Mammary epithelial cell (primary cell): ENCODE measurements at regions of chr19 and their contacts with region 1.

Region 1: DNA sequence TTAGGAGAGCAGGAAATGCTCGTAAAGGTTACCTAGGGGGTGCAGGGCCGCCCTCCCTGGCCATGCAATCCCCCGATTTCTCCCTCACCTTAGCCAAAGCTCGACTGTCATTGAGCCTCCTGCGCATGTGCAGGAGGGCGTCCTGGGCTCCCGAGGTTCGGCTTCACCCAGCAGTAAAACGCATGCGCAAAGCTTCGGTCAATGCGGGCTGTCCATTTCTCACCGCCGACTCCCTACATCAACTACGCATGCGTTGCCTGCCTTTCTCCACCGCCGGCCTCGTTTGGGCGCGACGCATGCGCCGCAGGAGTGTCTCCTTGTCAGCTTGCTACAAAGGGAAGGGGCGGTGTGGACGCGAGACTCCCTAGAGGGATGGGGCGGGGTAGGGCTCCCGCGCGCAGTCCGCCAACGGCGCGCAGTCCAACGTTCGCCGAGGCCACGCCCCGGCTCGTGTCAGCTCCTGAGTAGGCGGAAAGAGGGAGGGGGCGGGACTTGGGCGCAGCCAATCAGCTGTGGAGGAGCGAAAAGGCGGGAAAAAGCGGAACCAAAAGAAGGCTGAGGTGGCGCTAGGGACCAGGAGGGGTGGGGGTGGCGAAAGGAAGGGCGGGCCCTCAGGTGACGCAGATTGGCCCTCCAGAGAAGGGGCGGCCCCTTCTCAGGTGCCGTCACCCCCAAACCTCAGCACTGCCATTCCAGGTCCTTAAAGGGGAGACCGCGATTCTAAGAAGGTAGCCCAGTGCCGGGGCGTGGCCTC is at the starts of genes SYNGR4 and TMEM143:
- DNase-seq: peak; percentile 99
- H3K4me3 ChIP-seq: peak within 1 kb of the TSS; percentile 41 to 58 (median 50)
- H3K27ac ChIP-seq: peak within 1 kb of the TSS; percentile 79
- H3K4me1 ChIP-seq: peaks cover 8% of the 10 kb centered on the region
- H3K27me3 ChIP-seq: no peaks in the 10 kb centered on the region
- CTCF ChIP-seq: no peak
- total RNA-seq, gene SYNGR4: not detected
- total RNA-seq, gene TMEM143: 4.5 to 9.0 TPM

Region 2: DNA sequence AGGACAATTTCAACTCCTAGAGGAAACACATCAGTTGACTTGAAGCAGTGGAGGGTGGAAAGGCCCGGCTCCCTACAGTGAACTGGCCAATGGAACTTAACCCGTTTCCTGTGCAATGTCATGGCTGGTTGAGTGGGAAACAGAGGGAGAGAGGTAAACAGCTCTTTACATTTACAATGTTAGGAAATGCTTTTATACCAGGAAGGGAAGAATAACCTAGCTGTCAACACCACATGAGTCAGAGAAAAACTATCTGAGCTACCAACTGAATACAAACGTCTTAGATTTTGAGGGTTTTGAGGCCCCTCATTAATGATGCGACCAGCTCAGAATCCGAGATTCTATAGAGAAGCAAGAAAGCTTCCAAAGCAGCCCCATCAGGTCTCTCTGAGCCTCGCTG is 145.0 kb before region 1 on chr19:
- CTCF ChIA-PET with region 1: no interaction called
- dilution Hi-C with region 1: loop called (anchors 10 kb)
- in situ Hi-C with region 1: no loop called
- intact Hi-C with region 1: no loop called
- DNase-seq: no peak
- H3K4me3 ChIP-seq: no peak overlapping the region
- H3K27ac ChIP-seq: no peak overlapping the region
- H3K4me1 ChIP-seq: no peaks in the 10 kb centered on the region
- H3K27me3 ChIP-seq: no peaks in the 10 kb centered on the region
- CTCF ChIP-seq: no peak

Region 3: GRCh38 chr19:48340995-48341394 is 23.0 kb before region 1 on chr19:
- CTCF ChIA-PET with region 1: interaction called, 3 read pairs
- dilution Hi-C with region 1: no loop called
- in situ Hi-C with region 1: no loop called
- intact Hi-C with region 1: loop called (anchors 2 kb)
- DNase-seq: peak; percentile 91
- H3K4me3 ChIP-seq: no peak overlapping the region
- H3K27ac ChIP-seq: no peak overlapping the region
- H3K4me1 ChIP-seq: peaks cover 22% of the 10 kb centered on the region
- H3K27me3 ChIP-seq: no peaks in the 10 kb centered on the region
- CTCF ChIP-seq: no peak

Region 4: DNA sequence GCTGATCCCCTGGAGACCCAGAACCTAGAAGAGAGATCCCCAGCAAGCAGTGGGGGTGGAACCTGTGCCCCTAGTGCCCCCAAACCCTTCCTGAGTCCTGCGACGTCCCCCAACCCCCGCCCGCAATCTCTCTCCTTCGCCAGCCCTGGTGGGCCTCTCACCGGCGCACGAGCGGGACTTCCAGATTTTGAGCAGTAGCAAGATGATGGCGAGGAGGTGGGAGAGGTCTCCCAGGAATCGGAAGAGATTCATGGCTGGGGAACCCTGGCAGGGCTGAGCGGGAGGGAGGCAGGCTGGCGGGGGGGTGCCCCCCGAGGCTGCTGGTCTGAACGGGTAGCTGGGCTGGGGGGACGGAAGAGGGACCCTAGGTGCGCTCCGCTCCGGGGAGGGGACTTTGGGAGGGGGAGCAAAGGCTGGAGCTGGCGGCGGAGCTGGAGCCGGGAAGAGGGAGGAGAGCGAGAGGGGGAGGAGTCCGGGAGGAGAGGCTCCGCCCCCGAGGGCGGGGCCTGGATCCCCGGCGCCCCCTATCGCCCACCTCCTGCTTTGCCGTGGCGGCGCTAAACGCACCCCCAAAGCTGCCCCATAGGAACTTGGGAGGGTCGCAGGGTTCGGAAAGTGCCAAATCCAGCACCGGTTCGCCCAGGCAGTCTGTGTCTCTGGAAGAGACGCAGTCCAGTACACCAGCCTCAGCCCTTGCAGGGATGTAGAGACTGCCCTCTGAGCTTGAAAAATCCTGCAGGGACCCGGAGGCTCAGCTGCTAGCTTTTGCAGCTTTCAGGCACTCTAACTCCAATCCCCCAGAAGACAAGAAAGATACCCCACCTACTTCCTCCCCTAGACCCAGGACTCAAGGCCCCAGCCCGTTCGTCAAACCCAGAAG is 27.4 kb after region 1 on chr19 and contains the start of gene KDELR1:
- CTCF ChIA-PET with region 1: interaction called, 10 read pairs
- dilution Hi-C with region 1: no loop called
- in situ Hi-C with region 1: no loop called
- intact Hi-C with region 1: loop called (anchors 2 kb)
- DNase-seq: peak; percentile 58
- H3K4me3 ChIP-seq: peak within 1 kb of the TSS; percentile 63 to 94 (median 93)
- H3K27ac ChIP-seq: peak within 1 kb of the TSS; percentile 87
- H3K4me1 ChIP-seq: peaks cover 12% of the 10 kb centered on the region
- H3K27me3 ChIP-seq: peaks cover 10% of the 10 kb centered on the region
- CTCF ChIP-seq: peak; percentile 70 to 95
- total RNA-seq, gene KDELR1: 73.2 to 171 TPM

Region 5: GRCh38 chr19:48419158-48419920 is 55.4 kb after region 1 on chr19:
- CTCF ChIA-PET with region 1: no interaction called
- dilution Hi-C with region 1: loop called (anchors 5 kb)
- in situ Hi-C with region 1: no loop called
- intact Hi-C with region 1: no loop called
- DNase-seq: no peak
- H3K4me3 ChIP-seq: no peak overlapping the region
- H3K27ac ChIP-seq: no peak overlapping the region
- H3K4me1 ChIP-seq: peaks cover 4% of the 10 kb centered on the region
- H3K27me3 ChIP-seq: no peaks in the 10 kb centered on the region
- CTCF ChIP-seq: no peak